Breast epithelium (tissue), 4 donors: ENCODE measurements at regions of chr21 and their contacts with region 1.

Region 1: GRCh38 chr21:34833465-34833864 is 164.7 kb downstream of the CLIC6 start:
- DNase-seq: no peak
- H3K4me3 ChIP-seq: no peak overlapping the region
- H3K27ac ChIP-seq: no peak overlapping the region
- H3K4me1 ChIP-seq: peaks cover 21 to 26% of the 10 kb centered on the region in 2 donors
- H3K27me3 ChIP-seq: no peaks in the 10 kb centered on the region
- CTCF ChIP-seq: no peak
- POLR2A ChIP-seq: no peak

Region 2: GRCh38 chr21:34781526-34781925 is 51.9 kb before region 1 on chr21:
- intact Hi-C with region 1: loop called (anchors 2 kb)
- DNase-seq: no peak
- H3K4me3 ChIP-seq: no peak overlapping the region
- H3K27ac ChIP-seq: no peak overlapping the region
- H3K4me1 ChIP-seq: no peaks in the 10 kb centered on the region
- H3K27me3 ChIP-seq: no peaks in the 10 kb centered on the region
- CTCF ChIP-seq: no peak
- POLR2A ChIP-seq: no peak